Ovary (tissue), 10 donors: ENCODE measurements at regions of chr16 and their contacts with region 1.

Region 1: DNA sequence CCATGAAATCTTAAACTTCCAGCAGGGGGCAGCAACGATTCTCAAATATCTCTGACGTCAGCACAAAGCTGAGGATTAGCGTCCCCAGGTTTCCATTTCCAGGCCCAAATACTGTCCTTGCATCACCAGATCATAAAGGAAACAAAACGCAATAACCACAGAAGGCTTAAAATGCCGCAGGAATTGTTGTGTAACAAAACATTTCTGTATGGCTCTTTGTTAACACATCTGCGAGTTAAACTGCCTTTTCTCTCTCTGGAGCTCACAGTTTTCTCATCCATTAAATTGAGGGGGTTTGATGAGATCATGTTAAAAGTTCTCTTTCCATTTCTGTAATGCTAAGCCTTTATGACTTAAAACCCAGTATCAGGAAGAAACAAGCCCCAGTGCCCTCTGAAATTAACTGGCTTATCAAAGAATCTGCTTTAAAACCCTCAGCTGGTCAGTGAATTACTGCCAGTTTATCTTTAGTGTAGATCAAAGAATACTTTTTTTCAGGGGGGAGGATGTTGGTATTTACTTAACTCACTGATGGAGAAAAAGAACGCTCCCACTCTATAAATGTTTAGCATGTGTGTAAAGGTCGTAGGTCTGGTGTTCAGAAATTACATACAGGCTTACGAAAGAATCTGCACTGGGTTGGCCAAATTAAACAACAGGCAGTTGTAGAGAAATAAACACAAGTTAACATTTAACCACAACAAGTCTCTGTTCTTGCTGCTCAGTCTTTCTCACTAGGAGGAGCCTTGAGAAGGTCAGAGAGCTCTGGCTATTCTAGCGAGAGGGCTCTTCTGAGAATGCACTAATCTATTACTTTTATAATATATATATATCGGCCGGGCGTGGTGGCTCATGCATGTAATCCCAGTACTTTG is 10.6 kb upstream of the TERF2 start:
- DNase-seq: peak; percentile 52 to 88 (median 68)
- H3K4me3 ChIP-seq: no peak overlapping the region
- H3K27ac ChIP-seq: peak overlapping the region; percentile 35 to 79
- H3K4me1 ChIP-seq: peaks cover 8% of the 10 kb centered on the region
- H3K27me3 ChIP-seq: no peaks in the 10 kb centered on the region
- CTCF ChIP-seq: peak; percentile 70 to 87 (median 83)
- EP300 ChIP-seq: no peak
- POLR2A ChIP-seq: no peak

Region 2: GRCh38 chr16:69363281-69363717 is 33.1 kb before region 1 on chr16:
- intact Hi-C with region 1: no loop called
- DNase-seq: no peak
- H3K4me3 ChIP-seq: no peak overlapping the region
- H3K27ac ChIP-seq: no peak overlapping the region
- H3K4me1 ChIP-seq: no peaks in the 10 kb centered on the region
- H3K27me3 ChIP-seq: no peaks in the 10 kb centered on the region
- CTCF ChIP-seq: no peak
- EP300 ChIP-seq: no peak
- POLR2A ChIP-seq: no peak

Region 3: GRCh38 chr16:69482410-69482991 is 86.1 kb after region 1 on chr16:
- intact Hi-C with region 1: loop called in 1 of 4 experiments (anchors 10 kb)
- DNase-seq: peak; percentile 35 to 72 (median 44)
- H3K4me3 ChIP-seq: no peak overlapping the region
- H3K27ac ChIP-seq: peak overlapping the region in 1 of 2 donors; percentile 73
- H3K4me1 ChIP-seq: no peaks in the 10 kb centered on the region
- H3K27me3 ChIP-seq: no peaks in the 10 kb centered on the region
- CTCF ChIP-seq: no peak
- EP300 ChIP-seq: no peak
- POLR2A ChIP-seq: no peak

Region 4: GRCh38 chr16:69565671-69566239 is 169.3 kb after region 1 on chr16 and contains the start of gene NFAT5:
- intact Hi-C with region 1: loop called in 1 of 4 experiments (anchors 10 kb)
- DNase-seq: peak; percentile 87 to 98 (median 89)
- H3K4me3 ChIP-seq: peak within 1 kb of the TSS; percentile 96
- H3K27ac ChIP-seq: peak within 1 kb of the TSS; percentile 96 to 100
- H3K4me1 ChIP-seq: peaks cover 6% of the 10 kb centered on the region
- H3K27me3 ChIP-seq: no peaks in the 10 kb centered on the region
- CTCF ChIP-seq: no peak
- EP300 ChIP-seq: no peak
- POLR2A ChIP-seq: peak; percentile 94
- total RNA-seq, gene NFAT5: 33.5 to 47.9 (median 38.1) TPM

Region 5: DNA sequence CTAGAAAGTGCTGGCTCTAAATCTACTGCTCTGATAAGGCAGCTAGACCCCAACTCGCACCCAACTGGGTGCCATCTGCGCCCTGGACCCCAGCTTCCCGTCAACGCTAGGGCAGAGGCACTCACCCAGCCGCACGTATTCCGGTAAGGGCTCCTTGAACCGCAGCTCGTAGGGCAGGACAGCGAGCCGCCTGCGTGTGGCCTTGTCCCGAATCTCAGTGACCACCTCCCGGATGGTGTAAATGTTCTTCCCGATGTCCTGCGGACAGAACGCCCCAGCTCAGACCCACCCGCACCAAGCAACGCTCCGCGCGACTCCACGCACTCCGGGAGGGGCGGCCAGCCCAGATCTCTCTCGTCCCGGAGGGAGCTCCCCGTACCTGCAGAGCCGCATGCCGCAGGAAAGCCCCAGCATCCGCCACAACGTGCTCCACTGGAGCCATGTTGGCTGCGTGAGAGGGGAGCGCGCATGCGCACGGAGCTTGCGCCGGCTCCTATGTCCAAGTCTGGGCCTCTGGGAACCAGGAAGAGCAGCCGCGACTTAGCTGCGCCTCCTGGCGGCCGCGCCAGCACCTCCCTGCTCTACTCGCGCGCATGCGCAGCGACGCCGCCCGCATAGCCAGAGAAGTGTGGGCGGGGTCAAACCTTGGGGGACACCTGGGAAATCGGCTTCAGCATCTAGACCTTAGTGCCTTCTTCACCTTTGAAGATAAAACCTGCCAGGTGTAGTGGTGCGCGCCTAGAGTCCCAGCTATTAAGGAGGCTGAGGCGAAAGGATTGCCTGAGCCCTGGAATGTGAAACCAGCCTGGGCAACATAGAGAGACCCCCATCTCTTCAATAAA is 358.3 kb after region 1 on chr16 and contains the start of gene NOB1:
- intact Hi-C with region 1: loop called (anchors 5 to 10 kb)
- DNase-seq: peak; percentile 95 to 98 (median 98)
- H3K4me3 ChIP-seq: peak within 1 kb of the TSS; percentile 95
- H3K27ac ChIP-seq: peak within 1 kb of the TSS in 1 of 2 donors; percentile 27
- H3K4me1 ChIP-seq: peaks cover 6% of the 10 kb centered on the region
- H3K27me3 ChIP-seq: no peaks in the 10 kb centered on the region
- CTCF ChIP-seq: peak; percentile 95 to 100 (median 100)
- EP300 ChIP-seq: no peak
- POLR2A ChIP-seq: peak; percentile 50
- total RNA-seq, gene NOB1: 38.2 to 78.8 (median 62.1) TPM

Region 6: DNA sequence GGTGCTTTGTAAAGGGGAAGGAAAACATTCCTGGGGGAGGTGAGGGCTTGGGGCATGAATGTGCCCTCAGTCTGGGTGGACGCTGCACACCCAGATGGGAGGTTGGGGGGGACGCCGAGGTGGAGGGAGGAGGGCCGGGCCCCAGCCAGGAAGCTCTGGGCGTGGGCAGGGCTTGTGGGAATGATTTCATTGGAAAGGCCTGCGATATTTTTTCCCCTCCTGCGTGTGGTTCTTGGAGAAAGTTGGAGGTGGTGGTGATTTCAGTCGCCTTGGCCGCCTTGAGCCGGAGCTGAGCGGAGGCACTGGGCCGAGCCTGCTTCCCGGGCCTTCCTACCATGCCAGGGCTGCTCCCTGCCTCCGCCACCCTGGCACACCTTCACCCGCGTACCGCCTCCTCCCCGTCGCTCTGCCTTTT is 528.4 kb after region 1 on chr16:
- intact Hi-C with region 1: loop called in 1 of 4 experiments (anchors 10 kb)
- DNase-seq: peak; percentile 79 to 87 (median 81)
- H3K4me3 ChIP-seq: peak overlapping the region; percentile 29
- H3K27ac ChIP-seq: peak overlapping the region; percentile 87 to 90
- H3K4me1 ChIP-seq: peaks cover 11% of the 10 kb centered on the region
- H3K27me3 ChIP-seq: no peaks in the 10 kb centered on the region
- CTCF ChIP-seq: no peak
- EP300 ChIP-seq: no peak
- POLR2A ChIP-seq: peak; percentile 49